CD8-positive, alpha-beta memory T cell (primary cell): ENCODE measurements at regions of chr14 and their contacts with region 1.

Region 1: DNA sequence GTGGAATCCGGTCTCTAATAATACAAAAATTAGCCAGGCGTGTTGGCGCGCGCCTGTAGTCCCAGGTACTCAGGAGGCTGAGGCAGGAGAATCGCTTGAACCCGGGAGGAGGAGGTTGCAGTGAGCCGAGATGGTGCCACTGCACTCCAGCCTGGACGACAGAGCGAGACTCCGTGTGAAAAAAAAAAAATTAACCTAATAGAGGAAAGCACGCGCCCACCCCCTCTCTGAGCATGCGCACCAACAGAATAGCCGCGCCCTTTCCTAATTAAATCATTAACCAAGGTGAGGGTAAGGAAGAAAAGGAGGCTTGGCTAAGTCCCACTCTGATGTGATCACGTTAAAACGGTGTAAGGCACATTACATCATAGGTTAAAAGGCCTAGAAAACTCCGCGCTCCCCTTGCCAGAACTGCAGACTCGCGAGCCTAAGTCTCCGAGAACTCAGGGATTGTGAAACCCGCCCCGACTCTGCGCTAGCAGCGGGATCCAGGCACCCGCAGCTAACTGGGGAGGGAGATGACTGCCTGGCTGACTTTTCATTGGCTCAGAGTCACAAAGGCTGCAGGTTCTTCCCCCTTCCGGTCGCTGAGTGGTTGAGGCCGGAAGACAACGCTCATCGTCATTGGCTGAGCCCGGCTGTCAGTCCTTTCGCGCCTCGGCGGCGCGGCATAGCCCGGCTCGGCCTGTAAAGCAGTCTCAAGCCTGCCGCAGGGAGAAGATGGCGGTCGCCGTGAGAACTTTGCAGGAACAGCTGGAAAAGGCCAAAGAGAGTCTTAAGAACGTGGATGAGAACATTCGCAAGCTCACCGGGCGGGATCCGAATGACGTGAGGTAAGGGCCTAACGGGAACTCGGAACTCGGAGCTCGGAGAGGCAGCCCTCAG is at the start of gene PNN:
- DNase-seq: peak; percentile 92 to 99 (median 98)
- H3K4me3 ChIP-seq: peak within 1 kb of the TSS; percentile 91
- H3K4me3 Mint-ChIP-seq: peak within 1 kb of the TSS; percentile 97 to 100 (median 99)
- H3K27ac ChIP-seq: peak within 1 kb of the TSS; percentile 96
- H3K27ac Mint-ChIP-seq: peak within 1 kb of the TSS; percentile 97 to 100 (median 99)
- H3K4me1 ChIP-seq: peaks cover 36% of the 10 kb centered on the region
- H3K4me1 Mint-ChIP-seq: peaks cover 45 to 58% (median 57%) of the 10 kb centered on the region in 3 donors
- H3K27me3 ChIP-seq: no peaks in the 10 kb centered on the region
- H3K27me3 Mint-ChIP-seq: peaks cover 0 to 3% of the 10 kb centered on the region in 2 donors
- total RNA-seq, gene PNN: 92.5 to 94.0 TPM

Region 2: GRCh38 chr14:39138440-39138839 is 36.4 kb before region 1 on chr14:
- CTCF ChIA-PET with region 1: no interaction called
- POLR2A ChIA-PET with region 1: interaction called, 10 read pairs
- DNase-seq: no peak
- H3K4me3 ChIP-seq: no peak overlapping the region
- H3K4me3 Mint-ChIP-seq: no peak overlapping the region
- H3K27ac ChIP-seq: no peak overlapping the region
- H3K27ac Mint-ChIP-seq: peak overlapping the region in 4 of 8 donors; percentile 30 to 72 (median 53)
- H3K4me1 ChIP-seq: no peaks in the 10 kb centered on the region
- H3K4me1 Mint-ChIP-seq: peaks cover 0 to 10% (median 1%) of the 10 kb centered on the region in 3 donors
- H3K27me3 ChIP-seq: no peaks in the 10 kb centered on the region
- H3K27me3 Mint-ChIP-seq: no peaks in the 10 kb centered on the region